Esophagus muscularis mucosa (tissue), 4 donors: ENCODE measurements at regions of chr6 and their contacts with region 1.

Region 1: GRCh38 chr6:137866914-137867684 is at the start of gene TNFAIP3:
- DNase-seq: peak; percentile 98
- H3K4me3 ChIP-seq: peak within 1 kb of the TSS; percentile 70 to 93 (median 88)
- H3K27ac ChIP-seq: peak within 1 kb of the TSS; percentile 92 to 94 (median 92)
- H3K4me1 ChIP-seq: peaks cover 14 to 65% (median 63%) of the 10 kb centered on the region in 4 donors
- H3K27me3 ChIP-seq: no peaks in the 10 kb centered on the region
- CTCF ChIP-seq: peak; percentile 82 to 91 (median 88)
- EP300 ChIP-seq: peak; percentile 82
- POLR2A ChIP-seq: peak; percentile 57
- total RNA-seq, gene TNFAIP3: 21.0 to 54.3 (median 29.8) TPM

Region 2: GRCh38 chr6:137707590-137708360 is 159.3 kb before region 1 on chr6:
- intact Hi-C with region 1: loop called (anchors 2 kb)
- DNase-seq: no peak
- H3K4me3 ChIP-seq: peak overlapping the region; percentile 5 to 35 (median 16)
- H3K27ac ChIP-seq: peak overlapping the region in 1 of 4 donors; percentile 25
- H3K4me1 ChIP-seq: peaks cover 11 to 25% (median 14%) of the 10 kb centered on the region in 4 donors
- H3K27me3 ChIP-seq: no peaks in the 10 kb centered on the region
- CTCF ChIP-seq: peak; percentile 79 to 83 (median 82)
- EP300 ChIP-seq: peak; percentile 62
- POLR2A ChIP-seq: no peak

Region 3: DNA sequence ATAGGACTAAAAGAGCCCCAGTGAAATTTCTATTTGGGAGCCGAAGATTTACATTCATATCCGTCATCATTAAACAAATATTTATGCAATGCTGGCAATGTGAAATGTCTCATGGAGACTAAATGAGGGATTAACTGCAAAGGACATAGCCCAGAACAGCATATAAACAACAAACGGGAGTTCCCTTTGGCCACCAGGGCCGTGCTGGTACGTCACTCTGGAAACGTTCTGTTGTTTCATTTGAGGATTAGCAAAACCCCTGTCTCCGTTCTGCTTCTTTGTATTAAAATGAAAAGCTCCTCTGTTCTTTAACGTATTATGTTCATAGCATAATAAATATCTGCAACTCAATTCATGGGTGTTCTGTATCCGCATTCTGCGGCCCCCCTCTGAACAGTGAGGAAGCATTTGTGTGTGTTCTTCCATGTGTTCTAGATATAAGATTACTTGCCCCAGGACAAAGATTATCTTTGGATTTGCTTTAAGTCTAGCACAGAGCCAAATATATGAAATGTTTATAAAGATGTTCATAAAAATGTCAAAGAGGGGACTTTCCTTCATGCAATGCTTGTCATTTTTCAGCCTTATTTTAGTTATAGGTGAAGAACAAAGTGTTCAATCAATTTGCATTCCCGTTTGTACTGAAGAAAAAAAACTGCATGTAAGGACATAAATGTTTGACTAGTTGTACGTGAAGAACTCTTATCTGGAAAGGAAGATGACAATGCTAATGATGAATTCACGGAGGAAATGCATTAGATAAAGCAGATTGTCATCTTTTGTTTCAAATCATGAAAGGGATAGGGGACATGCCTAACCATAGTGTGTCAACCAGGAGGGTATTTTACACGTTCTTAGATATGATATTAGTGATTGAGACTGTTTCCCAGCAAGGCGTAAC is 90.1 kb before region 1 on chr6:
- intact Hi-C with region 1: loop called (anchors 2 kb)
- DNase-seq: peak; percentile 92
- H3K4me3 ChIP-seq: peak overlapping the region in 2 of 4 donors; percentile 5 to 17
- H3K27ac ChIP-seq: peak overlapping the region; percentile 81 to 91 (median 88)
- H3K4me1 ChIP-seq: peaks cover 14 to 90% (median 79%) of the 10 kb centered on the region in 4 donors
- H3K27me3 ChIP-seq: no peaks in the 10 kb centered on the region
- CTCF ChIP-seq: peak in 1 of 3 experiments; percentile 22
- EP300 ChIP-seq: peak; percentile 81
- POLR2A ChIP-seq: no peak

Region 4: GRCh38 chr6:137799950-137800568 is 67.0 kb before region 1 on chr6:
- intact Hi-C with region 1: loop called (anchors 5 kb)
- DNase-seq: no peak
- H3K4me3 ChIP-seq: no peak overlapping the region
- H3K27ac ChIP-seq: no peak overlapping the region
- H3K4me1 ChIP-seq: peaks cover 11 to 40% (median 35%) of the 10 kb centered on the region in 4 donors
- H3K27me3 ChIP-seq: no peaks in the 10 kb centered on the region
- CTCF ChIP-seq: peak; percentile 42 to 55 (median 44)
- EP300 ChIP-seq: no peak
- POLR2A ChIP-seq: no peak

Region 5: GRCh38 chr6:137823826-137824555 is 43.1 kb before region 1 on chr6:
- intact Hi-C with region 1: loop called (anchors 5 kb)
- DNase-seq: no peak
- H3K4me3 ChIP-seq: peak overlapping the region in 2 of 4 donors; percentile 1 to 2
- H3K27ac ChIP-seq: peak overlapping the region; percentile 69 to 75 (median 72)
- H3K4me1 ChIP-seq: peaks cover 15 to 63% (median 51%) of the 10 kb centered on the region in 4 donors
- H3K27me3 ChIP-seq: no peaks in the 10 kb centered on the region
- CTCF ChIP-seq: no peak
- EP300 ChIP-seq: peak; percentile 79
- POLR2A ChIP-seq: no peak

Region 6: GRCh38 chr6:137944793-137945498 is 77.8 kb after region 1 on chr6:
- intact Hi-C with region 1: loop called (anchors 5 kb)
- DNase-seq: no peak
- H3K4me3 ChIP-seq: peak overlapping the region in 1 of 4 donors; percentile 23
- H3K27ac ChIP-seq: no peak overlapping the region
- H3K4me1 ChIP-seq: peaks cover 6 to 13% (median 9%) of the 10 kb centered on the region in 4 donors
- H3K27me3 ChIP-seq: no peaks in the 10 kb centered on the region
- CTCF ChIP-seq: peak; percentile 78 to 87 (median 83)
- EP300 ChIP-seq: no peak
- POLR2A ChIP-seq: no peak

Region 7: DNA sequence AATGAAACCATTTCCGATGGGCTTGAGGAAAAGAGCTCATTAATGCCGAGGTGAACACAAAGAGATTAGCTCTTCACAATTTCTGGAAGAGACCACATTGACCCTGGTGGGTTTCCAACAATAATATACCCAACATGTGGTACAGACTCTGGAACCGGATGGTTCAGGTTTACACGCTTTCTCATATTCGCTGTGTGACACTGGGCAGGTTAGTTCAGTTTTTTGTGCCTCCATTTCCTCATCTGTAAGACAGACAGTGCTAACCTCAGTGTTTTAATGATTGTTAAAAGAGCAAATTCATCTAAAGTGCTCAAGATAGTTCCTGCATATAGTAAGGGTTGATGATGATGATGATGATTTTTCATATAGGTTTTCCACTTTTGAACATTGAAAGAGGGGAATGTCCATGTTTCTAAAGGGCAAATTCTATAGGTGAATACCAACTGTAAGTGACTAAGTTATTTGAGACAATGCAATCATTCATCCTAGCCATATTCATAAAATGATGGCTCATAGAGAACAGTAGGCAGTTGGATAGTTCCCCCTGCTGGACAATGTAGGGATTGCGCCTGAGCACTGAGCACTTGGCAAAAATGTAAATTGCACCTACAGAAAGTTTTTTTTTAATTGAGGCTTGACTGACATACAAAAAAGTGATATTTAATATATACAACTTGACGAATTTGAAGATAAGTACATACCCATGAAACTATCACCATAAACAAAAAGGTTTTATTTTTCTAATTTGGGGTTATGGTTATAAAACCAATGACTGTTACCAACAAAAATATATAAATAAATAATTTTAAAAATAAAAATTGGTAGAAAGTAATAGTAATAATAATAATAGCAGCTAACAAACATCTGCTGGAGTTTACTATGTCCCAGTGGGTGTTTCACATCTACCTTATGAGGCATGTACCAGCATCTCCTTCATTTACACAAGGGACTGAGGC is 242.2 kb after region 1 on chr6:
- intact Hi-C with region 1: loop called (anchors 10 kb)
- DNase-seq: no peak
- H3K4me3 ChIP-seq: no peak overlapping the region
- H3K27ac ChIP-seq: peak overlapping the region; percentile 50 to 97 (median 90)
- H3K4me1 ChIP-seq: peaks cover 10 to 41% (median 37%) of the 10 kb centered on the region in 4 donors
- H3K27me3 ChIP-seq: peaks cover 0 to 9% (median 0%) of the 10 kb centered on the region in 4 donors
- CTCF ChIP-seq: peak; percentile 97 to 99 (median 98)
- EP300 ChIP-seq: no peak
- POLR2A ChIP-seq: no peak